K562 (cell line): ENCODE measurements at regions of chr11 and their contacts with region 1.

Region 1: GRCh38 chr11:74255741-74256369 is 55.6 kb downstream of the P4HA3 start:
- DNase-seq: peak; percentile 72 to 77 (median 76)
- ATAC-seq: peak; percentile 89
- H3K4me3 ChIP-seq: no peak overlapping the region
- H3K27ac ChIP-seq: no peak overlapping the region
- H3K4me1 ChIP-seq: no peaks in the 10 kb centered on the region
- H3K27me3 ChIP-seq: peaks cover 2 to 3% of the 10 kb centered on the region in 2 experiments; a peak in 2 of 5 replicates
- CTCF ChIP-seq: peak; percentile 84 to 91 (median 85)
- EP300 ChIP-seq: no peak
- POLR2A ChIP-seq: no peak
- RAD21 ChIP-seq: peak; percentile 79 to 86

Region 2: GRCh38 chr11:74321487-74322188 is 65.8 kb after region 1 on chr11:
- CTCF ChIA-PET with region 1: interaction called, 4 read pairs
- POLR2A ChIA-PET with region 1: no interaction called
- in situ Hi-C with region 1: no loop called
- intact Hi-C with region 1: loop called (anchors 5 kb)
- DNase-seq: peak; percentile 30 to 59 (median 39)
- ATAC-seq: peak; percentile 74
- H3K4me3 ChIP-seq: no peak overlapping the region
- H3K27ac ChIP-seq: no peak overlapping the region
- H3K4me1 ChIP-seq: no peaks in the 10 kb centered on the region; a peak in 1 of 5 replicates
- H3K27me3 ChIP-seq: peaks cover 0 to 10% of the 10 kb centered on the region in 2 experiments; a peak in 1 of 5 replicates
- CTCF ChIP-seq: peak; percentile 61 to 75 (median 71); a peak in 5 of 6 replicates
- EP300 ChIP-seq: no peak
- POLR2A ChIP-seq: no peak
- RAD21 ChIP-seq: peak in 1 of 2 experiments; percentile 69; a peak in 3 of 4 replicates

Region 3: DNA sequence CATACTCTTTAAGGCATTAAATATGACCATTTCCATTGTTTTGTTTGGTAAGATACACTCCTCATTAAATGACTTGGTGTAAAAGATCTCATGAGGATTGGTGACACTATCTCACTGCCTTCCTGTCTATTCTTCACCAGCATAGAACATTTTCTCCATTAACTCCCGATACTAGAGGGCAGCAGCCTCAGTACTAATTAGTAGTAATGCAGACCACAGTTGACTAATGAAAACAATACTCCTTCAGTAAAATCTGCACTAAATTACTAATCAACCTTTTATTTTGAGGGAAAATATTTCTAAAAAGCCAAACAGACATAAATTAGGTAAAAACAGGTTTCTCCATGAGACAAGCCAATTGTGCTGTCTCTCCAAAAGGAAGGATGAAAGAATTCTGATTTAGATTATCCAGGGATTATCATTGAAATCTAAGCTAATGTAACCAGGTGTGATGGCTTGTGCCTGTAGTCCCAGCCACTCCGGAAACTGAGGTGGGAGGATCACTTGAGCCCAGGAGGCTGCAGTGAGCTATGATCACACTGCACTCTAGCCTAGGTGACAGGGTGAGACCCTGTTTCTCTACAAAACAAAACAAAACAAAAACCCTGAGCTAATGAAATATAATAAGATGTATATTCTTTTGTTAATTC is 132.9 kb after region 1 on chr11:
- CTCF ChIA-PET with region 1: interaction called, 3 read pairs
- POLR2A ChIA-PET with region 1: no interaction called
- in situ Hi-C with region 1: no loop called
- intact Hi-C with region 1: loop called (anchors 5 kb)
- DNase-seq: peak; percentile 31 to 72 (median 36)
- ATAC-seq: peak; percentile 89
- H3K4me3 ChIP-seq: no peak overlapping the region
- H3K27ac ChIP-seq: no peak overlapping the region
- H3K4me1 ChIP-seq: no peaks in the 10 kb centered on the region; a peak in 1 of 5 replicates
- H3K27me3 ChIP-seq: no peaks in the 10 kb centered on the region; a peak in 1 of 5 replicates
- CTCF ChIP-seq: peak; percentile 65 to 81 (median 65); a peak in 5 of 6 replicates
- EP300 ChIP-seq: no peak
- POLR2A ChIP-seq: no peak
- RAD21 ChIP-seq: peak; percentile 75 to 87

Region 4: GRCh38 chr11:74443071-74443864 is 187.4 kb after region 1 on chr11:
- CTCF ChIA-PET with region 1: no interaction called
- POLR2A ChIA-PET with region 1: no interaction called
- in situ Hi-C with region 1: loop called (anchors 5 kb)
- intact Hi-C with region 1: no loop called
- DNase-seq: peak in 1 of 4 experiments; percentile 43
- ATAC-seq: peak; percentile 72
- H3K4me3 ChIP-seq: no peak overlapping the region
- H3K27ac ChIP-seq: no peak overlapping the region
- H3K4me1 ChIP-seq: peaks cover 0 to 6% of the 10 kb centered on the region in 2 experiments; a peak in 2 of 5 replicates
- H3K27me3 ChIP-seq: no peaks in the 10 kb centered on the region; a peak in 1 of 5 replicates
- CTCF ChIP-seq: peak; percentile 26 to 48 (median 36); a peak in 4 of 6 replicates
- EP300 ChIP-seq: no peak
- POLR2A ChIP-seq: no peak
- RAD21 ChIP-seq: peak; percentile 14 to 65; a peak in 2 of 4 replicates

Region 5: DNA sequence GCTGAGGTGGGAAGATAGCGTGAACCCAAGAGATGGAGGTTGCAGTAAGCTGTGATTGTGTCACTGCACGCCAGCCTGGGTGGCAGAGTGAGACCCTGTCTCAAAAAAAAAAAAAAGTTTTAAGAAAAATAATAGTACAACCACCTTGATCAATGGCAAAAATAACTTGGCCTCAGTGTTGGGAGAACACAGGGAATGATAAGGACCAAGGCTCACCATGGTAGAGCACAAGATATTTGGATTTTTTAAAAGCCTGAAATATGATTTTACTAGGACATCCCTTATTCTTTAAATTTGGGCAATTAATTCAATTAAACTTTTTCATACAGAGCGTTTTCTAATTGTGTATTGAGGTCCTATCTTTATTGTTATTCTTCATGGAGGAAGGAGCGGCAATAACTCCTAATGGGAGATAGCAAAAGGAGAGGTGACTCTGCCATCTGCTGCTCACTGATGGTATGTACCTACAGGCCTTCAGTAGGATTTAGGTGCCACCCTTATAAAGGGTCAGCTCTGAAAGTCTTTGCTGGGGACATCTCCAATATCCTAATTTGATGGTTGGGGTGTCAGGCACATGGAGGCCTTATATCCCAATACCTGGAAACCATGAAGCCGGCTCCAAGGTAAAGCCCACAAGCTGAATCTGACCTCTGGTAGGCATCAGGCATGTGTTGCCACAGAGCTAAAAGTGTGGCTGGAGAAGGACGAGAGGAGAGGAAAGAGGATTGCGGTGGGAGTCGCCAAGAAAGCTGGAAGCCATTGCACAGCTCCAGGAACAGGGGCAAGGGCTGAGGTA is 314.6 kb after region 1 on chr11:
- CTCF ChIA-PET with region 1: interaction called, 7 read pairs
- POLR2A ChIA-PET with region 1: no interaction called
- in situ Hi-C with region 1: no loop called
- intact Hi-C with region 1: loop called (anchors 5 kb)
- DNase-seq: peak; percentile 67 to 74 (median 70)
- ATAC-seq: peak; percentile 96
- H3K4me3 ChIP-seq: no peak overlapping the region
- H3K27ac ChIP-seq: no peak overlapping the region
- H3K4me1 ChIP-seq: no peaks in the 10 kb centered on the region
- H3K27me3 ChIP-seq: peaks cover 12 to 13% of the 10 kb centered on the region in 2 experiments; a peak in 4 of 5 replicates
- CTCF ChIP-seq: peak; percentile 75 to 91 (median 81)
- EP300 ChIP-seq: no peak
- POLR2A ChIP-seq: no peak
- RAD21 ChIP-seq: peak; percentile 95 to 98